GM18951 (cell line): ENCODE measurements at regions of chr10 and their contacts with region 1.

Region 1: GRCh38 chr10:120735773-120736371 is 115.3 kb upstream of the WDR11 start:
- POLR2A ChIP-seq: no peak

Region 2: GRCh38 chr10:120423431-120424197 is 312.3 kb before region 1 on chr10:
- in situ Hi-C with region 1: loop called (anchors 10 kb)
- POLR2A ChIP-seq: no peak